Left colon (tissue), 2 donors: ENCODE measurements at regions of chr6 and their contacts with region 1.

Region 1: DNA sequence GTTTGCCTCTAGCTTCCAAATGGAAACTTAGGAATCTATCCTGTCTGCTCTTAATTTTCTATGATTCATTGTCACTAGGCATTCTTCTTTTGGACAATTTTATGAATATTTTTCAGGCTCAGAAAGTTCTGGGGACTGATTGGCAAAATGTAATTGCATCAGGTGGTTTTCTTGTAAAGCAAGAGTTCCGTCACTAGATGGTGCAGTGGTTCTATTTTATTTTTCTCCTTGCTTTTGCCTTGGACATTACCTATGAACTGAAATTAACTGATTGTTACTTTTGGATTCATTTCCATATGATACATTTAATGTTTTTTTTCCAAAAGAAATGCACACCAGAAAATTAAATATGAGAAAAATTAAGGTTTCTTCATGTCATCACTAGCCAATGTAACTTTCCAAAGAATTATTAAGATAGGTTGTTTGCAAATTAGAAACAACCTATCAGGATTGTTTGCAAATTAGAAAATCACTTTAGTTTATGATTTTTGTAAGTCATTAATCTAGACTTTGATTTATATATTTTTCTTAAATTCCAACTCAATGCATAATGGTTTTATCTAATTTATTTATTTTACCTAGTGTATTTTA is 48.0 kb downstream of the TMEM170B start:
- DNase-seq: no peak
- ATAC-seq: peak; percentile 38

Region 2: DNA sequence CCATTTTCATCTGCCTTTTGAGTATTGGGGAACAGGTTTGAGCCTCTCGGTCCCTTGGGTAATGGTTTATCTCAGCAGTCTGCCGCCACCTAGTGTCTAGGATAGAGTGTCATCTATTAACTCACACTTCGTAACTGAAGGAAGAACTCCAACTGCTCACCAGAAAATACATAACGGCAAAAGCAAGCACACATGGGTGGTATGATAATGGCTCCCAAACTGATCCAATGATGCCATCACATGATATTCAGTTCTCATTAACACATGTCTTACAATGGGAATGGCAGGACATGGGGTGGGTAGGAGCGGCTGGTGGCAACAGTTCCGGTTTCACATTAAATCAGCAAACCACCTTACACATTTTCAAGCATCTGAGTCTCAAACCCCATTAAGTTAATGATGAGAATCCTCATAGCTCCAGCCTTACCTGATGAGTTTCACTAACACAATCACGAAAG is 1020.4 kb after region 1 on chr6:
- intact Hi-C with region 1: loop called in 1 of 2 experiments (anchors 5 kb)
- DNase-seq: peak; percentile 48 to 52
- ATAC-seq: peak; percentile 90